ENCODE measurements at regions of chr3 and their contacts with region 1.

Region 1: GRCh38 chr3:197029511-197030167 is at the start of gene MELTF:
- DNase-seq: peak; percentile 80
- H3K4me3 Mint-ChIP-seq: peak within 1 kb of the TSS; percentile 77
- H3K27ac Mint-ChIP-seq: no peak within 1 kb of the TSS
- H3K4me1 Mint-ChIP-seq: peaks cover 11% of the 10 kb centered on the region
- H3K27me3 Mint-ChIP-seq: peaks cover 59% of the 10 kb centered on the region

Region 2: GRCh38 chr3:197002701-197003454 is 26.8 kb before region 1 on chr3:
- CTCF ChIA-PET with region 1: interaction called, 19 read pairs
- DNase-seq: peak; percentile 85
- H3K4me3 Mint-ChIP-seq: no peak overlapping the region
- H3K27ac Mint-ChIP-seq: no peak overlapping the region
- H3K4me1 Mint-ChIP-seq: peaks cover 20% of the 10 kb centered on the region
- H3K27me3 Mint-ChIP-seq: peaks cover 11% of the 10 kb centered on the region

Region 3: DNA sequence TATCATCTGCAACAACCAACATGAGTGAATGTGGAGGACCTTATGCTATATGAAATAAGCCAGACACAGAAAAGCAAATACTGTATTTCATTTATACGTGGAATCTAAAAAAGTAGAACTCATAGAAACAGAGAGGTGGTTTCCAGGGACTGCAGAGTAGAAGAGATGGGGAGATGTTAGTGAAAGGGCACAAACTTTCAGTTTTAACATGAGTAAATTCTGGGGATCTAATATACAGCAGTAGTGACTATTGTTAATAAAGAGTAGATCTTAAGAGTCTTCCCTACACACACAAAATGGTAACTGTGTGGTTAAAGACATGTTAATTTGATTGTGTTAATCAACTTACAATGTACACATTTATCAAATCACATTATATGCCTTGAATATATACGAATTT is 20.9 kb after region 1 on chr3:
- CTCF ChIA-PET with region 1: interaction called, 10 read pairs
- DNase-seq: no peak
- H3K4me3 Mint-ChIP-seq: no peak overlapping the region
- H3K27ac Mint-ChIP-seq: no peak overlapping the region
- H3K4me1 Mint-ChIP-seq: no peaks in the 10 kb centered on the region
- H3K27me3 Mint-ChIP-seq: no peaks in the 10 kb centered on the region

Region 4: DNA sequence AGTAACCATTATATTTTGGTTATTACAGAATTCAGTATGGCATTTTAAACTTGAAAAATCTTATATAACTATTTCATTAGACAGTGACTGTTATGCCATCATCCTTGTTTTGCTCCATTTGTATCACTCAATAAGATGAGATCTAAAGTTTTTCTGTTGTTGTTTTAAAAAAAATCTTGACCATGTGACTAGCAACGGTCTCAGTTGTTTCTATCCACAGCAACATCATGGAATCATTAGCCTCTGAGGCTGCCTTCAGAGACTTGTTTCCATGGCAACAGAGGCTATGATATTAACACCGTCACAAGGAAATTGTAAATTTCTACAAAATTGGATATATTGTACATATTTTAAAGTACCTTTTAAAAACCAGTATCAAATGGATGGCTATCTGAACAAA is 139.0 kb after region 1 on chr3:
- CTCF ChIA-PET with region 1: no interaction called
- DNase-seq: no peak
- H3K4me3 Mint-ChIP-seq: no peak overlapping the region
- H3K27ac Mint-ChIP-seq: no peak overlapping the region
- H3K4me1 Mint-ChIP-seq: no peaks in the 10 kb centered on the region
- H3K27me3 Mint-ChIP-seq: no peaks in the 10 kb centered on the region

Region 5: GRCh38 chr3:197325773-197326172 is 296.1 kb after region 1 on chr3:
- CTCF ChIA-PET with region 1: no interaction called
- DNase-seq: no peak
- H3K4me3 Mint-ChIP-seq: no peak overlapping the region
- H3K27ac Mint-ChIP-seq: no peak overlapping the region
- H3K4me1 Mint-ChIP-seq: no peaks in the 10 kb centered on the region
- H3K27me3 Mint-ChIP-seq: peaks cover 10% of the 10 kb centered on the region

Measured in activated naive CD4-positive, alpha-beta T cell treated with anti-CD3 and anti-CD28 coated beads, Interleukin-2, amount 10 ng/mL, durations not matched to agents 7 days and 5 days (primary cell).